Breast epithelium (tissue), 4 donors: ENCODE measurements at regions of chr20 and their contacts with region 1.

Region 1: GRCh38 chr20:472889-473292 is 10.6 kb upstream of the TBC1D20 start:
- DNase-seq: no peak
- H3K4me3 ChIP-seq: no peak overlapping the region
- H3K27ac ChIP-seq: no peak overlapping the region
- H3K4me1 ChIP-seq: no peaks in the 10 kb centered on the region
- H3K27me3 ChIP-seq: no peaks in the 10 kb centered on the region
- CTCF ChIP-seq: no peak
- POLR2A ChIP-seq: no peak

Region 2: GRCh38 chr20:428371-429200 is 44.3 kb before region 1 on chr20:
- intact Hi-C with region 1: loop called (anchors 1 kb)
- DNase-seq: no peak
- H3K4me3 ChIP-seq: no peak overlapping the region
- H3K27ac ChIP-seq: no peak overlapping the region
- H3K4me1 ChIP-seq: no peaks in the 10 kb centered on the region
- H3K27me3 ChIP-seq: no peaks in the 10 kb centered on the region
- CTCF ChIP-seq: no peak
- POLR2A ChIP-seq: no peak